ENCODE measurements at regions of chr12 and their contacts with region 1.

Region 1: DNA sequence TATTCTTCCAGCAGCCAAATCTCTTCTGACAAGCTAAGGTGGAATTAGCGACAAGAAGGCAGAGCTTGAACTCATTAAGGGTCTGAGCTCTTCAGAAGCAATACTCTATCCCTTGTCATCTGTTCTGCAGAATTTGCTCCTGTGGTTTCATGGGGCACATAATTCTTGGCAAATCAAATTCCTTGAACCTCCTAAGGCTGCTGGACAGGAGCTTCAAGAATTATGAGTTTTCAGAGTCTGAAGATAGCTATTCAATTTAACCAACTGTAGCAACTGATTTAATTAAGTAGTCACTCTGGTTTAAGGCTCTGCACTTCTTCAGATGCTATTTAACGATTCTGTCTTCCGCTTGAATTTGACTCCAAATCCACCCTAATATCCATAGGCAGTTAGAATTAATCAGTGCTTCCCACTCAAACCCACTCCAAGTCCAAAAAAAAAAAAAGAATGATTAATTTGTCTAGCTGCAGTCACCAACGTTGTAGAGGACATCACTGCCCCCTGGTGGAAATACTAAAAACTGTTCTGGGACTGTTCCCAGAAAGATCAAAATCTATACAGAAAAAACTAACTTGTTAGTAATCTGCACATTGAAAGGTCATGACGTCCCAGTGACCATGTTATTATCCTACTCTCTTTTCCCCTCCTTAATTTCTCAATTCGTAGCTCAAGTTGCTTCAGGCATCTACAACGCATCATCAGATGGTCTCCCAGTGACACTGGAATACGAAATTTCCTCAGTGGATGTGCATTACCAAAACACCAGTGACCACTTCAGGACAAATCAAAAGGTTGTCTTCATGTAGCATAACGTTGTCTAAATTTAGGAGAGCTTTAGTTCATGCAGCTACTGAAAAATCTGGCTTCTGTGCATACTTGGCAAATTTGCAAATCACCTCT is 169.8 kb downstream of the KIF21A start:
- H3K4me3 ChIP-seq: no peak overlapping the region
- H3K27ac ChIP-seq: no peak overlapping the region
- H3K4me1 ChIP-seq: no peaks in the 10 kb centered on the region
- CTCF ChIP-seq: peak; percentile 40; the same call in 1 of the 2 replicates

Region 2: GRCh38 chr12:38906482-38907170 is 366.5 kb before region 1 on chr12:
- CTCF ChIA-PET with region 1: interaction called, 11 read pairs
- POLR2A ChIA-PET with region 1: no interaction called
- H3K4me3 ChIP-seq: peak overlapping the region; percentile 70
- H3K27ac ChIP-seq: peak overlapping the region; percentile 99
- H3K4me1 ChIP-seq: peaks cover 7% of the 10 kb centered on the region
- CTCF ChIP-seq: peak; percentile 98

Region 3: DNA sequence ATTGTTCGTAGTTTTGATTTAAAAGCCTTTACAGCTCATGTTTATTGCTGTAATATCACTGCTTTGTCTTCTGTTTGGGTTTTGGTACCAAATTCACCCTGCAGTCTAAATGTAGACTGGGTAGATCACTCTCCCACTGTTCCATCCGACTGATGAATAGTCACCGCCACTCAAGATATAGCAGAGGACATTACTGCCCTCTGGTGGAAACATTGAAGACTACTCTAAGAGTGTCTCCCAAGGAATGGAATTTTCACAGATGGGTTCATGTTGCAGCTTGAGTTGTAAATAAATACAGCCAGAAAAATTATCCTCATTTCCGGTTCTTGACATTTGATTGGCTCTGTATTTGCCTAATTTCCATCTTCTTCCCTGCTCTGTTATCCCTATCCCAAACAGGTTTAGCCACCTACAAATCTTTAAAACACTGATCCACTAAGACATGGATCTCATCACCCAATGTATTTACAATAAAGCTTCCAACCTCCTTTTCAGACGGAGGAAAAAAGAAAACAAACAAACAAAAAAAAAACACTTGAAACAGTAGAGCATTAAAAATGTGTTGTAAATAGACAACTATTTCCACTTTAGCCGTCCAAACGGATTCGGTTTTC is 169.5 kb before region 1 on chr12:
- CTCF ChIA-PET with region 1: interaction called, 40 read pairs
- POLR2A ChIA-PET with region 1: no interaction called
- H3K4me3 ChIP-seq: no peak overlapping the region
- H3K27ac ChIP-seq: no peak overlapping the region
- H3K4me1 ChIP-seq: no peaks in the 10 kb centered on the region
- CTCF ChIP-seq: peak; percentile 73

Region 4: GRCh38 chr12:39237004-39237403 is 36.1 kb before region 1 on chr12:
- CTCF ChIA-PET with region 1: interaction called, 11 read pairs
- POLR2A ChIA-PET with region 1: no interaction called
- H3K4me3 ChIP-seq: no peak overlapping the region
- H3K27ac ChIP-seq: no peak overlapping the region
- H3K4me1 ChIP-seq: peaks cover 2% of the 10 kb centered on the region; the same call in 1 of the 2 replicates
- CTCF ChIP-seq: no peak

Region 5: GRCh38 chr12:39736406-39736805 is 463.3 kb after region 1 on chr12:
- CTCF ChIA-PET with region 1: no interaction called
- POLR2A ChIA-PET with region 1: no interaction called
- H3K4me3 ChIP-seq: no peak overlapping the region
- H3K27ac ChIP-seq: no peak overlapping the region
- H3K4me1 ChIP-seq: no peaks in the 10 kb centered on the region
- CTCF ChIP-seq: no peak

Measured in HEK293 (cell line).